CD4-positive, alpha-beta T cell (primary cell): ENCODE measurements at regions of chr22 and their contacts with region 1.

Region 1: DNA sequence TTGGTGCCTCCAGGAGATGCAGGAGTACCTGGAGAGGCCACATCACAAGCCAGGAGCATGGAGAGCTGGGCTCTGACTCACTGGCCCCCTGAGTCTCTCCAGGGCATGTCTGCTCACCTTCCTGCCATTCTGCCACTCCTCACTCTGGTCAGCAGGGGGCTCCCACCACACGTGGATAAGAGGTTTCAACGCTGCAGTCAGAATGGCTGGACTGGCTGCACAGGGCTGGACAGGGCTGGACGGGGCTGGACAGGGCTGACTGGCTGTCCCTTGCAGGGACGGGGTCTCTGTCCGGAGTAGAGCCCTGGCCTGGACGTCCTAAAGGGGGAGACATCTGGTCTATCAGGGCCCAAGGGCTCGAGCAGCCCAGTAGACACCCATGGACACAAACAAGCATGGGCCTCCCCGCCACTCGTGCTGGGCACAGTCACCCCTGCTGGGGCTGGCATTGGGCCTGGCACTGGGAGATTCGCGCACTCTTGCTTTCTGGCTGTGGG is 34.6 kb downstream of the CYTH4 start:
- DNase-seq: peak; percentile 45 to 86 (median 67)
- ATAC-seq: peak; percentile 82
- H3K4me3 ChIP-seq: no peak overlapping the region
- H3K4me3 Mint-ChIP-seq: no peak overlapping the region
- H3K27ac ChIP-seq: no peak overlapping the region
- H3K27ac Mint-ChIP-seq: peak overlapping the region; percentile 33
- H3K4me1 ChIP-seq: peaks cover 52% of the 10 kb centered on the region
- H3K4me1 Mint-ChIP-seq: peaks cover 39% of the 10 kb centered on the region
- H3K27me3 ChIP-seq: no peaks in the 10 kb centered on the region
- H3K27me3 Mint-ChIP-seq: no peaks in the 10 kb centered on the region
- CTCF ChIP-seq: peak; percentile 92

Region 2: DNA sequence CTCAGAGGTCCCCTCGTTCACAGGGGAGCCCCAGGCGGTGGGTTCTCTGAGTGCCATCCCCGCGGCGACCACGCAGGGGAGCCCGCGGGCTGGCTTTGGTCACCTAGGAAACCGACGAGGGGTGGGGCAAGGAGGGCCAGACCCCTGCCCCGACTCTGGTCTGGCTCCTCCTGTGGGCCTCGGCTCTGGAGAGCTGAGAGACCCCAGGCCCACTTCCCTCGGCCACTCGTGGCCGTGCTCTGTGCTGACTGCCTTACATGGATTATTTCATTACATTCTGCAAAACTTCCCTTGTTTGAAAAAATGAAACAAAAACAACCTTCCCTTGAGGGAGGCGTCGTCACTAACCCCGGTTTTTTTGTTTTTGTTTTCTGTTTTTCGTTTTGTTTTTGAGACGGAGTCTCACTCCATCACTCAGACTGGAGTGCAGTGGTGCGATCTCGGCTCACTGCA is 49.8 kb before region 1 on chr22:
- CTCF ChIA-PET with region 1: no interaction called
- POLR2A ChIA-PET with region 1: interaction called, 10 read pairs
- intact Hi-C with region 1: loop called in 1 of 2 experiments (anchors 2 kb)
- DNase-seq: peak; percentile 46 to 84 (median 70)
- ATAC-seq: peak; percentile 91
- H3K4me3 ChIP-seq: peak overlapping the region; percentile 71
- H3K4me3 Mint-ChIP-seq: peak overlapping the region; percentile 87
- H3K27ac ChIP-seq: peak overlapping the region; percentile 67 to 86
- H3K27ac Mint-ChIP-seq: peak overlapping the region; percentile 91
- H3K4me1 ChIP-seq: peaks cover 24% of the 10 kb centered on the region
- H3K4me1 Mint-ChIP-seq: peaks cover 40% of the 10 kb centered on the region
- H3K27me3 ChIP-seq: no peaks in the 10 kb centered on the region
- H3K27me3 Mint-ChIP-seq: no peaks in the 10 kb centered on the region
- CTCF ChIP-seq: peak; percentile 99

Region 3: GRCh38 chr22:37303821-37304274 is 13.1 kb before region 1 on chr22:
- CTCF ChIA-PET with region 1: interaction called, 6 read pairs
- POLR2A ChIA-PET with region 1: interaction called, 16 read pairs
- intact Hi-C with region 1: no loop called
- DNase-seq: peak in 5 of 14 experiments; percentile 31 to 78 (median 67)
- ATAC-seq: no peak
- H3K4me3 ChIP-seq: no peak overlapping the region
- H3K4me3 Mint-ChIP-seq: peak overlapping the region; percentile 27
- H3K27ac ChIP-seq: peak overlapping the region; percentile 92 to 97
- H3K27ac Mint-ChIP-seq: peak overlapping the region; percentile 95
- H3K4me1 ChIP-seq: peaks cover 100% of the 10 kb centered on the region
- H3K4me1 Mint-ChIP-seq: peaks cover 90% of the 10 kb centered on the region
- H3K27me3 ChIP-seq: no peaks in the 10 kb centered on the region
- H3K27me3 Mint-ChIP-seq: no peaks in the 10 kb centered on the region
- CTCF ChIP-seq: no peak

Region 4: GRCh38 chr22:37328017-37328416 is 11.1 kb after region 1 on chr22:
- CTCF ChIA-PET with region 1: no interaction called
- POLR2A ChIA-PET with region 1: no interaction called
- intact Hi-C with region 1: no loop called
- DNase-seq: no peak
- ATAC-seq: no peak
- H3K4me3 ChIP-seq: no peak overlapping the region
- H3K4me3 Mint-ChIP-seq: no peak overlapping the region
- H3K27ac ChIP-seq: no peak overlapping the region
- H3K27ac Mint-ChIP-seq: no peak overlapping the region
- H3K4me1 ChIP-seq: peaks cover 11% of the 10 kb centered on the region
- H3K4me1 Mint-ChIP-seq: no peaks in the 10 kb centered on the region
- H3K27me3 ChIP-seq: peaks cover 48 to 54% of the 10 kb centered on the region in 2 experiments
- H3K27me3 Mint-ChIP-seq: peaks cover 77% of the 10 kb centered on the region
- CTCF ChIP-seq: no peak

Region 5: DNA sequence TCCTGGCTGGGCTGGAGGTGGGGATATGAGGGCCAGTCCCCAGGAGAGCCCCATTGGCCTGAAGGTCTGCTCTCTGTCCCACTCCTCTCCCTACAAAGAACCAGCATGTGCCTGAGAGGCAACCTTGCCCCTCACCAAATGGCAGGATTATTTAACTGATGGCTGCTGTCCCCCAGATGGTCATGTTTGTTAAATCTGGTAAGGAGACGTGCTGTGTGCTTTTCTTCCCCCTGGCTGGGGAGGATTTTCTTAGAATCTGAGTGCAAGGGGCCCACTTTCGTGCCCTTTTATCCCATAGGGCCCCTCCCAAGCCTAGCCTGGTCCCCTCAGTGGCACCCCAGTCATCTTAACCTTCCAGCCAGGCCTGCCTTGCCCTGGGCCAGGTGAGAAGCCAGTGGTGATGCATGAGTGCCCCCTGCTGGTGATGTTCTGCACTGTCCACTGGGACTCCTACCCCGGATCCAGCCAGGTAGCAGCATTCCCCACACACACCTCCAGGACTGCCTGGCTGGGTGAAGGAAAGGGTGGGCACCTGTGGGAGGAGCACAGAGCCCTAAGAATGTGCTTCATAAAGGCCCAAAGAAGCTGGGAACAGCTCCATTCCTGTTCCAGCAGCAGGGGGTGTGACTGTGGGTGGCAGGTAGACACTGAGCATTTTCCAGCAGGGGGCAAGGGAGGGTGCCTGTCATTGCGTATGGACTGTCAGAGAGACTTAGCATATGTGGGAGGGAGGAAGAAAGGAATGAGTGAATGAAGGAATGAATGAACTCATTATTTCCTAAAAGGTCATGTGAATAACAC is 140.4 kb after region 1 on chr22:
- CTCF ChIA-PET with region 1: interaction called, 4 read pairs
- POLR2A ChIA-PET with region 1: interaction called, 3 read pairs
- intact Hi-C with region 1: loop called (anchors 1 kb)
- DNase-seq: peak; percentile 74 to 90 (median 85)
- ATAC-seq: peak; percentile 98
- H3K4me3 ChIP-seq: no peak overlapping the region
- H3K4me3 Mint-ChIP-seq: no peak overlapping the region
- H3K27ac ChIP-seq: no peak overlapping the region
- H3K27ac Mint-ChIP-seq: no peak overlapping the region
- H3K4me1 ChIP-seq: peaks cover 5% of the 10 kb centered on the region
- H3K4me1 Mint-ChIP-seq: peaks cover 6% of the 10 kb centered on the region
- H3K27me3 ChIP-seq: no peaks in the 10 kb centered on the region
- H3K27me3 Mint-ChIP-seq: no peaks in the 10 kb centered on the region
- CTCF ChIP-seq: peak; percentile 92

Region 6: GRCh38 chr22:37566903-37567820 is 250.2 kb after region 1 on chr22:
- CTCF ChIA-PET with region 1: interaction called, 6 read pairs
- POLR2A ChIA-PET with region 1: interaction called, 3 read pairs
- intact Hi-C with region 1: loop called in 1 of 2 experiments (anchors 2 kb)
- DNase-seq: peak; percentile 79 to 96 (median 89)
- ATAC-seq: peak; percentile 90
- H3K4me3 ChIP-seq: peak overlapping the region; percentile 22
- H3K4me3 Mint-ChIP-seq: peak overlapping the region; percentile 69
- H3K27ac ChIP-seq: no peak overlapping the region
- H3K27ac Mint-ChIP-seq: no peak overlapping the region
- H3K4me1 ChIP-seq: peaks cover 28% of the 10 kb centered on the region
- H3K4me1 Mint-ChIP-seq: peaks cover 29% of the 10 kb centered on the region
- H3K27me3 ChIP-seq: peaks cover 9 to 17% of the 10 kb centered on the region in 2 experiments
- H3K27me3 Mint-ChIP-seq: peaks cover 26% of the 10 kb centered on the region
- CTCF ChIP-seq: peak; percentile 92